GM12878 (cell line): ENCODE measurements at regions of chr17 and their contacts with region 1.

Region 1: GRCh38 chr17:57243171-57243948 is 13.0 kb upstream of the MSI2 start:
- DNase-seq: peak; percentile 50
- ATAC-seq: peak; percentile 93
- H3K4me3 ChIP-seq: no peak overlapping the region
- H3K27ac ChIP-seq: no peak overlapping the region
- H3K4me1 ChIP-seq: no peaks in the 10 kb centered on the region
- H3K27me3 ChIP-seq: no peaks in the 10 kb centered on the region
- CTCF ChIP-seq: peak; percentile 100; a peak in 5 of 6 replicates
- EP300 ChIP-seq: no peak
- POLR2A ChIP-seq: no peak
- RAD21 ChIP-seq: peak; percentile 97

Region 2: DNA sequence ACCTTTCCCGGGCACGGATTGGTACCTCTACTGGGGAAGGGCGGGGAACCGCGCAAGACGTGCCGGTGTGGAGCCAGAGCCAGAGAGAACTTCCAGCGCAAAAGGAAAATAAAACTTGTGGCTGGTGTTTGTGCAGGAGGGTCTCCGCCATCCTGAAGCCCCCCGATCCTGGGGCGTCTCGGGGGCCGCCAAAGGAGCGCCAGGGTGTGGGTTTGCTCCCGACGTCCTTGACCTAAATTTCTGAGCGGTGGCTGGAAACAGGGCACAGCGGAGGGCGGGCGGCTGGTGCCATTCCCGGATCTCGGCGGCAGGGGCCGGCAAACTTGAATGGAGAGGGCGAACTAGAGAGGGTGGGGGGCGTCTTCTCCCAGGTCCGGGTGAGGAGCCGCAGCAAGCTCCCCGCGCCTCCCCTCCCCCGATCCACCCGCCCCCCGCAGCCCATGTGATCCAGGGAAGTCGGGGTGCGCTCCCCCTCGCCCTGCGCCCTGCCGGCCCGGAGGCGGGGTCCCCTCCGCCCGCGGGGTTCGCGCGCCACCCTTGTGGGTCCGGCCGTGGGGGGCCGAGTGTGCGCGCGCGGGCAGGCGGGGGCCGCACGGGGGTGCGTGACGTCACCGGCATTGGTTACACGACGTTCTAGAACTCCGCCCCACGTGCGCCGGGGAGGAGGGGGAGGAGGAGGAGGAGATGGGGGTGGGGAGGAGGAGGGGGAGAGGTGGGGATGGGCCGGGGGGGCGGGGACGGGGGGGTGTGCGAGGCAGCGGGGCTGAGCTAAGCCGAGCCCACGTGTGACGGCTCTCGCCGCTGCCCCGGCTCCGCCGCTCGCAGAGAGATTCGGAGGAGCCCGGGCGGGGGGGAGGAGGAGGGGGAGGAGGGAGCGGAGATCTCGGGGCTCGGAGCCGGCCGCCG is 12.7 kb after region 1 on chr17 and contains the start of gene MSI2:
- CTCF ChIA-PET with region 1: interaction called, 61 read pairs
- POLR2A ChIA-PET with region 1: interaction called, 5 read pairs
- RAD21 ChIA-PET with region 1: interaction called, 24 read pairs
- SMC1A ChIA-PET with region 1: interaction called, 45 read pairs
- in situ Hi-C with region 1: no loop called
- intact Hi-C with region 1: no loop called
- DNase-seq: peak; percentile 51
- ATAC-seq: peak; percentile 82
- H3K4me3 ChIP-seq: peak within 1 kb of the TSS; percentile 95
- H3K27ac ChIP-seq: peak within 1 kb of the TSS; percentile 34
- H3K4me1 ChIP-seq: peaks cover 6% of the 10 kb centered on the region
- H3K27me3 ChIP-seq: no peaks in the 10 kb centered on the region
- CTCF ChIP-seq: no peak
- EP300 ChIP-seq: no peak
- POLR2A ChIP-seq: no peak
- RAD21 ChIP-seq: no peak
- polyA plus RNA-seq, gene MSI2: 6.1 to 9.5 TPM

Region 3: GRCh38 chr17:57370037-57370581 is 126.7 kb after region 1 on chr17:
- CTCF ChIA-PET with region 1: interaction called, 14 read pairs
- POLR2A ChIA-PET with region 1: no interaction called
- RAD21 ChIA-PET with region 1: interaction called, 22 read pairs
- SMC1A ChIA-PET with region 1: interaction called, 9 read pairs
- in situ Hi-C with region 1: no loop called
- intact Hi-C with region 1: no loop called
- DNase-seq: no peak
- ATAC-seq: peak; percentile 84
- H3K4me3 ChIP-seq: no peak overlapping the region
- H3K27ac ChIP-seq: peak overlapping the region; percentile 75
- H3K4me1 ChIP-seq: peaks cover 51% of the 10 kb centered on the region
- H3K27me3 ChIP-seq: no peaks in the 10 kb centered on the region
- CTCF ChIP-seq: no peak
- EP300 ChIP-seq: peak; percentile 47 to 88; a peak in 3 of 4 replicates
- POLR2A ChIP-seq: no peak
- RAD21 ChIP-seq: no peak

Region 4: GRCh38 chr17:57440522-57441485 is 197.4 kb after region 1 on chr17:
- CTCF ChIA-PET with region 1: interaction called, 130 read pairs
- POLR2A ChIA-PET with region 1: interaction called, 10 read pairs
- RAD21 ChIA-PET with region 1: interaction called, 91 read pairs
- SMC1A ChIA-PET with region 1: interaction called, 90 read pairs
- in situ Hi-C with region 1: no loop called
- intact Hi-C with region 1: loop called (anchors 2 kb)
- DNase-seq: peak; percentile 63
- ATAC-seq: peak; percentile 79
- H3K4me3 ChIP-seq: peak overlapping the region; percentile 17; the same call in 1 of the 2 replicates
- H3K27ac ChIP-seq: peak overlapping the region; percentile 92
- H3K4me1 ChIP-seq: peaks cover 58% of the 10 kb centered on the region
- H3K27me3 ChIP-seq: no peaks in the 10 kb centered on the region
- CTCF ChIP-seq: peak; percentile 44 to 71 (median 69)
- EP300 ChIP-seq: peak; percentile 75 to 76; a peak in 2 of 4 replicates
- POLR2A ChIP-seq: no peak; the same call in 1 of the 2 replicates
- RAD21 ChIP-seq: no peak

Region 5: DNA sequence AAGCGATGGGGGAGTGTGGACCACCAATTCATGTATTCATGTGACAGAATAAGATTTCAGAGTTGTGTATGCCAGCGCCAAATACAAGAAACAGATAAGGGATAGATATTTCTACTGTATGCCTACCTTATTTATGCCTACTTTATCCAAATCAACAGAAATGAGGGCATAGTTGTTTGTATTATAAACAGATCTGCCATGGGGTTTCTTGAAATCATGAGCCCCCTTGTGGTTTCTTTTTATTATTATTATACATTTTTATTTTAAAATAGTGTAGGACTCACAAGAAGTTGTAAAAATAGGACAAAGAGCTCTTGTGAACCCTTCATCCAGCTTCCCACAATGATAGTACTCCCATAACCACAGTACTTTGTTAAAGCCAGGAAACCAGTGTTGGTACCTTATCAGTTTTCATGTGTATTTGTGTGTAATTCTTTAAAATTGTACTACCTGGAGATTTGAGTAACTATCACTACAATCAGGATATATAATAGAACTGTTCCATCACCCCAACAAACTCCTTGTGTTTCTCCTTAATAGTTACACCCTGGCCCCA is 272.4 kb after region 1 on chr17:
- CTCF ChIA-PET with region 1: interaction called, 26 read pairs
- POLR2A ChIA-PET with region 1: no interaction called
- RAD21 ChIA-PET with region 1: interaction called, 4 read pairs
- SMC1A ChIA-PET with region 1: interaction called, 11 read pairs
- in situ Hi-C with region 1: no loop called
- intact Hi-C with region 1: no loop called
- DNase-seq: no peak
- ATAC-seq: no peak
- H3K4me3 ChIP-seq: no peak overlapping the region
- H3K27ac ChIP-seq: no peak overlapping the region
- H3K4me1 ChIP-seq: no peaks in the 10 kb centered on the region
- H3K27me3 ChIP-seq: no peaks in the 10 kb centered on the region
- CTCF ChIP-seq: no peak
- EP300 ChIP-seq: no peak
- POLR2A ChIP-seq: no peak
- RAD21 ChIP-seq: peak; percentile 44

Region 6: GRCh38 chr17:57739402-57740392 is 496.3 kb after region 1 on chr17:
- CTCF ChIA-PET with region 1: interaction called, 57 read pairs
- POLR2A ChIA-PET with region 1: no interaction called
- RAD21 ChIA-PET with region 1: interaction called, 9 read pairs
- SMC1A ChIA-PET with region 1: interaction called, 19 read pairs
- in situ Hi-C with region 1: no loop called
- intact Hi-C with region 1: no loop called
- DNase-seq: no peak
- ATAC-seq: peak; percentile 87
- H3K4me3 ChIP-seq: no peak overlapping the region
- H3K27ac ChIP-seq: no peak overlapping the region
- H3K4me1 ChIP-seq: peaks cover 20% of the 10 kb centered on the region
- H3K27me3 ChIP-seq: no peaks in the 10 kb centered on the region
- CTCF ChIP-seq: peak; percentile 48 to 63 (median 60); a peak in 5 of 6 replicates
- EP300 ChIP-seq: no peak
- POLR2A ChIP-seq: no peak
- RAD21 ChIP-seq: peak; percentile 71